WTC11 (cell line): ENCODE measurements at regions of chr19 and their contacts with region 1.

Region 1: DNA sequence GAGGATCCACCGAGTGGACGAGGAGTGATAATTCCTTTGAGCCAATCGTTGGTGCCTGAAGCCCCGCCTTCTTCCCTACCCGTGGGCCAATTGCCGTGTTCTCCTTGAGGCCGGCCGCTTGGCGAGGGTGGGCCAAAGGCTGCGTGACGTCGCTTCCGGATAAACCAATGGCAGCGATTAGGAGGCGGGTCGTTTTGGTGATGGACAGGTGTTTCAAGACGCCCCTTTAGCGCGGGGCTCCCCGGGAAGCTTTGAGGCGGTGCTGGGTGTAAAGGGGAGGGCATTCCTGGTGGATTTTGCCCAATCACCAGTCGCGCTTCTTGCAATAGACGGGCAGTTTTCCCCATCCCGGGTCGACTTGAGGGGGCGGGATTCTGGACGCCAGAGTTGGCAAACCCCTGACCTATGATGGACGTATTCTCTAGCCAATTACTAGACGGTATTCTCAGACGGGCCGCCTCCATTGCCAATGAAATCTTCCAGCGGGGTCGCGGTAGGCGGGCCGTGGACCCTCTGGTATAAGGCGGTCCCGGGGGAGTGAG is 310 bp upstream of the PRMT1 start:
- DNase-seq: peak; percentile 100
- ATAC-seq: peak; percentile 70
- H3K4me3 Mint-ChIP-seq: peak overlapping the region; percentile 88
- H3K27ac Mint-ChIP-seq: peak overlapping the region; percentile 100
- H3K4me1 Mint-ChIP-seq: peaks cover 31% of the 10 kb centered on the region
- H3K27me3 Mint-ChIP-seq: no peaks in the 10 kb centered on the region
- CTCF ChIP-seq: no peak

Region 2: GRCh38 chr19:49590071-49590970 is 86.4 kb before region 1 on chr19:
- CTCF ChIA-PET with region 1: interaction called, 10 read pairs
- POLR2A ChIA-PET with region 1: interaction called, 9 read pairs
- DNase-seq: peak; percentile 99
- ATAC-seq: peak; percentile 84
- H3K4me3 Mint-ChIP-seq: peak overlapping the region; percentile 95
- H3K27ac Mint-ChIP-seq: peak overlapping the region; percentile 92
- H3K4me1 Mint-ChIP-seq: peaks cover 12% of the 10 kb centered on the region
- H3K27me3 Mint-ChIP-seq: no peaks in the 10 kb centered on the region
- CTCF ChIP-seq: no peak

Region 3: GRCh38 chr19:49640113-49640898 is 36.5 kb before region 1 on chr19 and contains the start of gene RRAS:
- CTCF ChIA-PET with region 1: interaction called, 108 read pairs
- POLR2A ChIA-PET with region 1: interaction called, 30 read pairs
- DNase-seq: peak; percentile 100
- ATAC-seq: peak; percentile 76
- H3K4me3 Mint-ChIP-seq: peak within 1 kb of the TSS; percentile 99
- H3K27ac Mint-ChIP-seq: peak within 1 kb of the TSS; percentile 99
- H3K4me1 Mint-ChIP-seq: peaks cover 62% of the 10 kb centered on the region
- H3K27me3 Mint-ChIP-seq: peaks cover 32% of the 10 kb centered on the region
- CTCF ChIP-seq: no peak
- total RNA-seq, gene RRAS: 11.4 to 17.9 TPM (median 15.7 TPM) in 3 replicates

Region 4: DNA sequence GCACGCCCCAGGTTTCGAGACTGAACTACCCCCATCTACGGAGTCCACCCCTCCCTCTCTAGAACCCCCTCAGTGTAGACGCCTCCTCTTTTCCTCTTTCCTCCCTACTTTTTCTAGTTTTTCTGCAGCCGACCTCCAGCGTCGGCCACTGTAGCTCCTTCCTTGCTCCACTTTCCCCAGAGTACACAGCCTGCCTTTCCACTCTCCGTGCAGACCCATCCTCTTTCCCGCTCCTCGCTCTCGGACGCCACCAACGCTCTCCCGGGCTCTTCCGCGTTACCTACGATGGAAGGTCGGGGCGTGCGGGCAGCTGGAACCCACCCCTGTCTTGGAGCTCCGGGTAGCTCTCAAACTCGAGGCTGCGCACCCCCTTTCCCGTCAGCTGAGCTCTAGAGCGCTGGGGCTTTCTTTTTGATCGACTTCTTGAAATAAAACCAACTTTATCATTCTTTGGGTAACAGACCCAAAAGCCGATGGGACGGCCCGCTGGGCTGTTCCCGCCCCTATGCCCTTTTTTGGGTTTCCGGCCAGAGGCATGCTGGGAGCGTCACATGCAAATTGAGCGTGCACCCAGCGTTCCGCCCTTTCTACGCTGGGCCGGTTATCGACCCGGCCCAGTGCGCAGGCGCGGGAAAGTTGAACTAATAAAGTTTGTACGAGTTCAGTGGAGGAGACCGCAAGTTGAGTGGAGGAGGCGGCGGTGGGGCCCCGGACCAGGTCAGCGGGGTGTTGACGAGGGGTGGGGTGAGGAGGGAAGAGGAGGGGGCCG is 11.2 kb before region 1 on chr19 and contains the starts of genes BCL2L12 and IRF3:
- CTCF ChIA-PET with region 1: interaction called, 35 read pairs
- POLR2A ChIA-PET with region 1: interaction called, 29 read pairs
- DNase-seq: peak; percentile 97
- ATAC-seq: peak; percentile 70
- H3K4me3 Mint-ChIP-seq: peak within 1 kb of the TSS; percentile 98
- H3K27ac Mint-ChIP-seq: peak within 1 kb of the TSS; percentile 98
- H3K4me1 Mint-ChIP-seq: peaks cover 12% of the 10 kb centered on the region
- H3K27me3 Mint-ChIP-seq: no peaks in the 10 kb centered on the region; the same call in 1 of the 2 replicates
- CTCF ChIP-seq: no peak
- total RNA-seq, gene BCL2L12: 139 to 146 TPM (median 140 TPM) in 3 replicates
- total RNA-seq, gene IRF3: 149 to 165 TPM (median 154 TPM) in 3 replicates

Region 5: DNA sequence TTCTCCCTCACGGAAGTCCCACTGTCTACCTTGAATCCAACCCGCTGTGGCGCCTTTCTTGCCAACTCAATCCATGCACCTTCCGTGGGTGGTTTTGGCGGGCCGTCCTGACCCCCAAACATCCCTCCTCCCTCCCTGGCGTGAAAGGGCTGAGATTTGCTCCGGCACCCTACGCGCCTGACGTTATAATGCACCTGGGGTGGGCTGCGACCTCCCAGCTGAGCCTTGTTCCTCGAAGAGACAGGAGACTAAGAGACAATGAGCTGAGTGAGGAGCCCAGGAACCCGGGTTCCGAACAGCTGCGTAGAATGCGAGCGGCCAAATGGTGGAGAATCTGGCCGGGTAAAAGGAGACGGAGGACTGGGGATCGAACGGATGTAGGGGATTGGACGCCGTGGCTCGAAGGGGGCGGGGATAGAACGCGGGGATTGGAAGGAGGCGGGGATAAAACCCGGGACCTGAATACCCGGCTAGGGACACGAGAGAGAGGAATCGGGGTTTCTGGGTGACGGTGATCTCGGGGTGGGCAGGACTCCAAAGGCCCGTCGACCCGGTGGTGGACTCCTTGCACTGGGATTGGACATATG is 14.0 kb after region 1 on chr19 and contains the start of gene CPT1C:
- CTCF ChIA-PET with region 1: interaction called, 19 read pairs
- POLR2A ChIA-PET with region 1: interaction called, 38 read pairs
- DNase-seq: peak; percentile 93
- ATAC-seq: peak; percentile 72
- H3K4me3 Mint-ChIP-seq: peak within 1 kb of the TSS; percentile 93
- H3K27ac Mint-ChIP-seq: peak within 1 kb of the TSS; percentile 96
- H3K4me1 Mint-ChIP-seq: peaks cover 37% of the 10 kb centered on the region
- H3K27me3 Mint-ChIP-seq: no peaks in the 10 kb centered on the region
- CTCF ChIP-seq: no peak
- total RNA-seq, gene CPT1C: 74.6 to 89.5 TPM (median 85.4 TPM) in 3 replicates

Region 6: DNA sequence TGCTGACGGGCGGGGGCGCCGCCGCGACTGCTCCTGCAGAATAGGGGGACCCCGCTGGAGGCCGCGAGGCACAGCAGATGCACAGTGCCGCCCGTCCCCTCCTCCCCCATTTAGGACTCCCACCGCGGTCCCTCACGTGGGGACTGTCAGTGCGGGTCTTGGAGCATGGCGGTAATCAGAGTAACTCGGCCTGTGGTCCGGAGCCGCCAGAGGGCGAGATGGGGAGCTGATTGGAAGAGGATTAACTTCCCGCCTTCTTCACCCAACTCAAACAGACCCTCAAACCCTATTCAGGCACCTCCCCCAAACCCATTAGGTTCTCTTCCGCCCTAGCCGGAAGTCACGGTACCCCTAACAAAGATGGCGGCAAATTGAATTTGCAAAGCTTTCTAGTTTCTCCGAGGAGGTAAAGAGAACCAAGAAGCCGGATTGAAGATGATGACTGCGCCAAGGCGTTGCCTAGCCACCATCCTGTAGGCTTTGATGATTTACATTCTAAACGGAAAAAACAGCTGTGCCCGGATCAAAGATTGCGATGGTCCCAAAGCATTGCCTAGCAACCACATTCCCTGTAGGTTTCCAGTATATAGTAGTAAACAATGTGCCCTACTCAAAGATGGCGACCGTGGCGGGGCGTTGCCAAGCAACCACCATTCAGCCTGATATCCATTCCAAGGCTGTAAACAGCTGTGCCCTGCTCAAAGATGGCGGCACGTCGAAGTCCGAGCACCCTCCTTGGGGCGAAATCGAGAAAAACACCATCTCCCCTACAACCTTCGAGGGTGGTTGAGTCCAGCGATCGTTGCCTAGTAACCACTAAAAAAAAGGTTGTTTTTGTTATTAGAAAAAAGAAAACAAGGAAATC is 136.5 kb after region 1 on chr19 and contains the start of gene FUZ:
- CTCF ChIA-PET with region 1: interaction called, 3 read pairs
- POLR2A ChIA-PET with region 1: interaction called, 11 read pairs
- DNase-seq: peak; percentile 98
- ATAC-seq: peak; percentile 63
- H3K4me3 Mint-ChIP-seq: peak within 1 kb of the TSS; percentile 90
- H3K27ac Mint-ChIP-seq: peak within 1 kb of the TSS; percentile 98
- H3K4me1 Mint-ChIP-seq: peaks cover 26% of the 10 kb centered on the region
- H3K27me3 Mint-ChIP-seq: peaks cover 5% of the 10 kb centered on the region; the same call in 1 of the 2 replicates
- CTCF ChIP-seq: no peak
- total RNA-seq, gene FUZ: 35.1 to 36.3 TPM (median 35.7 TPM) in 3 replicates

Region 7: DNA sequence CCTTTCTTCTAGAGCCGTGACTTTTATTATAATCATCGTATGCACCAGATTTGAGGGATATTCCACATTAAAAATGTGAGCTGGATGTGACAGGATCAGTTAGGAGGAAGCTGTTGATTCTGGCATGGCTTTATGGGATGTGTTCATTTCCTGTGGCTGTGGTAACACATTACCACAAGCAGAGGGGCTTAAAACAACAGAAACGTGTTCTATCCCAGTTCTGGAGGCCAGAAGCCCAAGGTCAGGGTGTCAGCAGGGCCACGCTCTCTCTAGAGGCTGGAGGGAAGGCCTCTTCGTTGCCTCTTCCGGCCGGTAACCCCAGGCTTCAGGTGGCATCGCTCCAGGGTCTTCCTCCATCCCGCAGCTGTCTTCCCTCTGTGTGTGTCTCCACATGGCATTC is 155.8 kb after region 1 on chr19:
- CTCF ChIA-PET with region 1: no interaction called
- POLR2A ChIA-PET with region 1: no interaction called
- DNase-seq: no peak
- ATAC-seq: no peak
- H3K4me3 Mint-ChIP-seq: no peak overlapping the region
- H3K27ac Mint-ChIP-seq: no peak overlapping the region
- H3K4me1 Mint-ChIP-seq: no peaks in the 10 kb centered on the region
- H3K27me3 Mint-ChIP-seq: no peaks in the 10 kb centered on the region
- CTCF ChIP-seq: no peak